Dorsolateral prefrontal cortex (tissue), 120 donors: ENCODE measurements at regions of chr7 and their contacts with region 1.

Region 1: GRCh38 chr7:191981-192649 is at the start of gene FAM20C:
- DNase-seq: peak; percentile 71 to 93 (median 82)
- H3K4me3 ChIP-seq: peak within 1 kb of the TSS; percentile 60 to 97 (median 81)
- H3K27ac ChIP-seq: peak within 1 kb of the TSS; percentile 68 to 97 (median 92)
- H3K27me3 ChIP-seq: no peaks in the 10 kb centered on the region
- CTCF ChIP-seq: peak in 16 of 56 donors; percentile 8 to 49 (median 20)
- total RNA-seq, gene FAM20C: 27.8 to 127 (median 45.4) TPM

Region 2: GRCh38 chr7:56291-56913 is 135.7 kb before region 1 on chr7:
- intact Hi-C with region 1: no loop called
- DNase-seq: peak in 3 of 10 donors; percentile 17 to 64 (median 31)
- H3K4me3 ChIP-seq: no peak overlapping the region
- H3K27ac ChIP-seq: no peak overlapping the region
- H3K27me3 ChIP-seq: no peaks in the 10 kb centered on the region
- CTCF ChIP-seq: no peak

Region 3: GRCh38 chr7:148932-149855 is 42.9 kb before region 1 on chr7:
- intact Hi-C with region 1: loop called (anchors 1 to 2 kb)
- DNase-seq: peak; percentile 89 to 99 (median 96)
- H3K4me3 ChIP-seq: peak overlapping the region; percentile 45 to 95 (median 72)
- H3K27ac ChIP-seq: peak overlapping the region; percentile 86 to 100 (median 98)
- H3K27me3 ChIP-seq: no peaks in the 10 kb centered on the region
- CTCF ChIP-seq: peak in 43 of 56 donors; percentile 0 to 60 (median 34)